OCI-LY7 (cell line): ENCODE measurements at regions of chr19 and their contacts with region 1.

Region 1: GRCh38 chr19:572140-572742 is at the start of gene BSG:
- DNase-seq: peak; percentile 99
- H3K4me3 ChIP-seq: peak within 1 kb of the TSS; percentile 95
- H3K27ac ChIP-seq: peak within 1 kb of the TSS; percentile 88
- H3K4me1 ChIP-seq: peaks cover 32% of the 10 kb centered on the region
- CTCF ChIP-seq: no peak
- total RNA-seq, gene BSG: 158 and 180 TPM in 2 replicates

Region 2: DNA sequence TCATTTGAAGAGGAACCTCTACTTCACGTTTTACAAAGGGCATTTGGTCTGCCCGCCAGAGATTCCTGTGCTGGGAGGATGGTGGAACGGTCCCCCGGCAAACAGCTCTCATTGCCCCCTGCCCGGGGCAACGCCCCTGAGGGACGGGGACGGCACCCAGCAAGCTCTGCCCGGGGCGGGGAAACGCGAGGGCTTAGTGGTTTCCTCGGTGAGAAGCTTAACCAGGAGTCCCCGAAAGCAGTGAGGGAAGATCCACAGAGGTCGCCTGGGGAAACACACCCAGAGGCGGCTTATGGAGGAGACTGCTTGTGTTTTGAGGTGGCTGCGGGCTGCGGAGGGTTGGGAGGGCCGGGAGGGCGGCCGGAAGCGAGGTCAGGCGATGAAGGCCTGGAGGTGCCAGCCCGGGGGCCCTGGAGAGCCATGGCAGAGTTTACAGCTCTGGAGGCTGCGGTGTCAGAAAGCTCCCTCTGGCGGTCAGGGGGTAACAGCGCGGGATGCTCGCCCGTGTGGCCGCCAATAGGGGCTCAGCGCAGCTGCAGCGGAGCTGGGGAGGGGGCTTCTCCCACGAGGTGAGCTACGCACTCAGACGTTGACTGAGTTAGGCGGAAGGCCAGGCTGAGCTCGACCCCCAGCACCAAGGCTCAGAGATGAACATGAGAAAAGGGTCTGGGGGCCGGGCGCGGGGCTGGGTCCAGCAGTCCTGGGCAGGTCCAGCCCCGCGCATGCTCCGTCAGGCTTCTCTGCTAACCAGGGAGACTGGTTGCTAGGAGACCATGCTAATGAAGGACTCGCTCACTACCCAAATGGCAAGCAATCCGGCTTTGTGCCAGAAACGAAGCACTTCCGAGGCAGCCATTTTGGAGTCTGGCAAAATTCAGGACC is 65.6 kb before region 1 on chr19:
- CTCF ChIA-PET with region 1: interaction called, 6 read pairs
- POLR2A ChIA-PET with region 1: no interaction called
- intact Hi-C with region 1: loop called (anchors 2 kb)
- DNase-seq: peak; percentile 99
- H3K4me3 ChIP-seq: peak overlapping the region; percentile 83
- H3K27ac ChIP-seq: peak overlapping the region; percentile 54
- H3K4me1 ChIP-seq: peaks cover 36% of the 10 kb centered on the region
- CTCF ChIP-seq: peak; percentile 87

Region 3: DNA sequence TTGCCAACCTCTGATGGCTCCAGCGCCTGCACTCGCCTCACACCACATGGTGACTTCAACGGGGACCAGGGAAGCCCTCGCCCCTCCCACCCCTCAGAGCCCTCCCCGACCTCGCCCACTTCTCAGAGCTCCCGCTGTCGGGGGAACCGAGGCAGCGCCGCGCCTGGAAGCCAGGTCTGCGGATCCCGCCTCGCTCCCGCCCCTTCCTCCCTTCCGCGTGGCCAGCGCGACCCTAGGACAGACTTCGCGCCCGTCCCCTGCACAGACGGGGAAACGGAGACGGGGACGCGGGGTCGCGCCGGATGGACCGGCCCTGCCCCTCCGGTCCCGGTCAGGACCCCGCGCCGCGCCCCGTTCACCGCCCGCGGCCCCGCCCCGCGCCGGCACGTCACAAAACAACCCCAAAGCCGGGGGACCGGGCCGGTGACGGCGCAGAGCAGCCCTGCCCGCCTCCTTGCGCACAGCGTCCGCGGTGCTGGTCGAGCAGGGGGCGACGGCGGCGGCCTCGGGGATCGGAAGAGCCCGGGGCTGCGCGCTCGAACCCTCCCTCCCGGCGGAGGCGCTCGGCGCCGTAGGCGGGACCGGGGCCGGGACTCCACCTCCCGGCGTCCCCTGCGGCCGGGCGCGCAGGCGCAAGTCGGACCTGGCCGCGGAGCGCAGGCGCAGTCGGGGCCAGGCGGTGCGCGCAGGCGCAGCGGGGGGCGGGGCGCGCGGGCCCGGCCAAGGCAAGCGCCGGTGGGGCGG is 41.1 kb before region 1 on chr19:
- CTCF ChIA-PET with region 1: no interaction called
- POLR2A ChIA-PET with region 1: interaction called, 3 read pairs
- intact Hi-C with region 1: loop called (anchors 5 kb)
- DNase-seq: peak; percentile 92
- H3K4me3 ChIP-seq: peak overlapping the region; percentile 96
- H3K27ac ChIP-seq: peak overlapping the region; percentile 50
- H3K4me1 ChIP-seq: peaks cover 17% of the 10 kb centered on the region
- CTCF ChIP-seq: peak; percentile 35; the same call in 1 of the 2 replicates

Region 4: DNA sequence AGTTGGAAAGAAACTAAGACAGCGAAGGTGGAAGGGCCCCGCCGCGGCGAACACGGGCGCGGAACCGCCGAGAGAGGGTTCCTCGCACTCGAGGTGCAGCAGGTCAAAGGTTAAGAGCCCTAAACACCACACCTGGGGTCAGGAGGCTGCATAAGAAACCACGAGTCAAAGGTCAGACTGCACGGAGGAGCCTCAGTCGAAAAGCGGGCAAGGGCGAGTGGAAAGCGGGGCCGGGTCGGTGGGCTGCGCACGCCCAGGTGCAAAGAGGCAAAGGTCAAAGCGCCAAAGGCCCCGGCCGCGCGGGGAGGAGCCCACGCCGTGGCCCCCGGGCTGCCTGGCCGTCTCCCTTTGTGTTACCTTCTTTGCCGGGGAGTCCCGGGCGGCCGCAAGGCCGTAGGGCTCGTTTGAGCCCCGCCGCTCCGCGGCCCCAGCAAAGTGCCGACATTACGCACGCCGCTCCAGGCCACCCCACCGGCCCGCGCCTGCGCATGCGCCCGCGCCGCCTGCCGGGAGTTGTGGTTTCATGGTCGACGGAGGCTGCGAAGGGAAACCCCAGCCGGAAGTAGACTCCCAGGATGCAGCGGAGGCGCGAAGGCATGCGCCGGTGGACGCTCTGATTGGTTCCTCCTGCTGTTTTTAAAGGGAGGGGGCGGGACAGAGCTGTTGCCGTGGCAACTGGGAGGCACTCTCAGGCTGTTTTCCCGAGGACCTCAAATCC is 61.0 kb after region 1 on chr19 and contains the start of gene POLRMT:
- CTCF ChIA-PET with region 1: no interaction called
- POLR2A ChIA-PET with region 1: no interaction called
- intact Hi-C with region 1: loop called (anchors 2 kb)
- DNase-seq: peak; percentile 99
- H3K4me3 ChIP-seq: peak within 1 kb of the TSS; percentile 93
- H3K27ac ChIP-seq: peak within 1 kb of the TSS; percentile 50
- H3K4me1 ChIP-seq: peaks cover 9% of the 10 kb centered on the region
- CTCF ChIP-seq: no peak
- total RNA-seq, gene POLRMT: 50.0 and 65.5 TPM in 2 replicates

Region 5: GRCh38 chr19:796692-797527 is 224.7 kb after region 1 on chr19 and contains the start of gene PTBP1:
- CTCF ChIA-PET with region 1: no interaction called
- POLR2A ChIA-PET with region 1: no interaction called
- intact Hi-C with region 1: loop called (anchors 5 kb)
- DNase-seq: peak; percentile 100
- H3K4me3 ChIP-seq: peak within 1 kb of the TSS; percentile 98
- H3K27ac ChIP-seq: peak within 1 kb of the TSS; percentile 79
- H3K4me1 ChIP-seq: peaks cover 21% of the 10 kb centered on the region
- CTCF ChIP-seq: no peak
- total RNA-seq, gene PTBP1: 284 and 315 TPM in 2 replicates